ENCODE measurements at regions of chr14 and their contacts with region 1.

Region 1: DNA sequence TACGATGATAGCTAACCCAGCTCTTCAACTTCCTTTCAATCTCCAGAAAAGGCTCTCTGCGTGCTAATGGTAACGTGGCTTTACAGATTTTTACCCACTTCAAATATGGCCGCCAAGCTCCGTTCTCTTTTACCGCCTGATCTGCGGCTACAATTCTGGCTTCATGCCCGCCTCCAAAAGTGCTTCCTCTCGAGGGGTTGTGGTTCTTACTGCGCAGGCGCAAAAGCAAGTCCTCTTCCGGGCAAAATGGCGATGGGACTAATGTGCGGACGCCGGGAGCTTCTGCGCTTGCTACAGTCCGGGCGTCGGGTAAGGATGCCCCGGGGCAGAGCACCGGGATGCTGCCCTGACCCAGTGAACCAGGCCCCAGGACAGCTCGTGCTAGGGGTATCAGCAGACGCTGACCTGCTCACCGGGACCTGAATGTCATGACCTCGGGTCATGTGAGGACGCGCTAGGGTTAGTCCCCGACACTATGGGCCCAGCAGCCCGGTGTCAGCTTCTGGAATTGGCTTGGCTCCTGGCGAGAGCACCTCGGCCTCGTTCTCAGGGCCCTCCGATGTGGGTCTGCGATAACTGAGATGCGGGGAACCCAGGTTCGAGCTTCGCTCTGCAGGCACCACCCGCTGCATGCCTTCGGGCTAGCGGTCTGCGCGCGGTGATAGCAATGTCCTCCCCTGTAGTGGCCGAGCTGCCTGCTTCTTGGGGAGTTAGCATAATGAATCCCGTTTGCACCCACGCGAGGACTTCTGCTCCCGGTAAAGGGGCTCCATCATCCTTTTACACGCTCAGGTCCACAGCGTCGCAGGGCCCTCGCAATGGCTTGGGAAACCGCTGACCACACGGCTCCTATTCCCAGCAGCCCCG is at the start of gene OXA1L:
- DNase-seq: peak; percentile 90 to 99 (median 96)

Region 2: GRCh38 chr14:22589096-22589839 is 177.4 kb before region 1 on chr14 and contains the start of gene DAD1:
- intact Hi-C with region 1: loop called (anchors 2 kb)
- DNase-seq: peak; percentile 91 to 98 (median 96)

Region 3: DNA sequence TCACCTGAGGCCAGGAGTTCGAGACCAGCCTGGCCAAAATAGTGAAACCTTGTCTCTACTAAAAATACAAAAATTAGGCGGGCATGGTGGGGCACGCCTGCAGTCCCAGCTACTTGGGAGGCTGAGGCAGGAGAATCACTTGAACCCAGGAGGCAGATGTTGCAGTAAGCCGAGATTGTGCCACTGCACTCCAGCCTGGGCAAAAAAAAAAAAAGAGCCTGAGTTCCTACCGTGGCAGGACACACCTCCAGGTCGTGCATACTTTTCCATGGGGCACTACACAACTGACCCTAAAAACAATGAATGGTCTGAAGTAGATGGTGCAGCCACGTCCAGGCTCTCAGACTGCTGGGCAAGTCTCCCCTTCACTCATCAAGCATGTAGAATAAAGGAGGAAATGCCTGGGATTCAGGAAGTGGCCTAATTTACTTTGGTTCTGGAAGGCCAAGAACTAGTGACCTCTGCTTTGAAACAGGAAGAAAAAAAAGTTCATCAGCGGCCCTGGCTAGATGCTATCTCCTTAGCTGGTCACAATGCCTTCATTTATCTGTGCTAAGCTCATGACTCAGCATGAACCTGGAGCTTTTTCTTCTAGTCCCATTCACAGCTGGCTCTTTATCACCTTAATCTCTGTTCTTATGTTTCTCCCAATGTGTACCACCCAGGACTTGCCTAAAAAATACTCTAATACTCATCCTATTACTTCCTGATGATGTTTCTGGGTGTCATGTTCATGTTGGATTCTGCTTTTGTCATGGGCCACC is 66.7 kb before region 1 on chr14:
- intact Hi-C with region 1: no loop called
- DNase-seq: no peak

Region 4: GRCh38 chr14:22822571-22823098 is 55.9 kb after region 1 on chr14:
- intact Hi-C with region 1: loop called (anchors 5 kb)
- DNase-seq: peak; percentile 48 to 88 (median 74)

Region 5: DNA sequence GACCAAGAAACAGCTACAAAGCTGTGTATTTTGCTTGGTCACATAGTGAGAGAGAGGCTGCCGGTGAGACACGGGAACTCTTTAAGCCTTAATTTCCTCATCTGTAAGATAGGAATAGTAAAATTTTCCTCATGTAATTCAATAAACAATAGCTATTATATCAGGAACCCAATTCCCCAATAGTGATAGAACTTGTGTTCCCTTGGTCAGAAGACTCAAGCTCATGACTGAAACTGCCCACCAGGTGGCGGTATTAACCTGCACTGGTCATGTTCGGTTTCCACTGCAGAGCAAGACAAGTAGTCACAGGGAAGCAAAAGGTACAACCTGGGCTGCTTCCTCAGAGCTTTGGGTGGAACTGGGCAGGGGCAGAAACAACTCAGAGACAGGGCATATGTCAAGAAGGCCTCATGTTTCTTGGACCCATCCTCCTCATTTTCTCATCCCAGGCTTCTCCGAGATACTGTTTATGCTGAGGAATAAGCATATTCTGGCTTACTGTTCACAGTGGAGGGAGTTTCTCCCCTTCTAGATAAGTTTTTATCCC is 219.9 kb after region 1 on chr14:
- intact Hi-C with region 1: no loop called
- DNase-seq: peak; percentile 73 to 99 (median 94)